Adrenal gland (tissue), 19 donors: ENCODE measurements at regions of chr11 and their contacts with region 1.

Region 1: GRCh38 chr11:76444384-76445123 is at the start of gene EMSY:
- DNase-seq: peak; percentile 95 to 99 (median 98)
- H3K4me3 ChIP-seq: peak within 1 kb of the TSS; percentile 85 to 97 (median 90)
- H3K27ac ChIP-seq: peak within 1 kb of the TSS; percentile 85 to 97 (median 91)
- H3K4me1 ChIP-seq: peaks cover 11 to 21% of the 10 kb centered on the region in 2 donors
- H3K27me3 ChIP-seq: no peaks in the 10 kb centered on the region
- CTCF ChIP-seq: peak in 1 of 6 experiments; percentile 14
- POLR2A ChIP-seq: peak; percentile 92 to 98
- total RNA-seq, gene EMSY: 13.3 to 48.0 (median 18.6) TPM

Region 2: GRCh38 chr11:76207642-76208401 is 236.7 kb before region 1 on chr11:
- intact Hi-C with region 1: loop called in 1 of 2 experiments (anchors 10 kb)
- DNase-seq: peak; percentile 72 to 85 (median 81)
- H3K4me3 ChIP-seq: peak overlapping the region in 3 of 4 donors; percentile 62 to 86 (median 65)
- H3K27ac ChIP-seq: peak overlapping the region in 2 of 5 donors; percentile 69 to 83
- H3K4me1 ChIP-seq: peaks cover 27 to 45% of the 10 kb centered on the region in 2 donors
- H3K27me3 ChIP-seq: no peaks in the 10 kb centered on the region
- CTCF ChIP-seq: peak; percentile 85 to 98 (median 94)
- POLR2A ChIP-seq: no peak